Mucosa of descending colon (tissue), 3 donors: ENCODE measurements at regions of chr3 and their contacts with region 1.

Region 1: DNA sequence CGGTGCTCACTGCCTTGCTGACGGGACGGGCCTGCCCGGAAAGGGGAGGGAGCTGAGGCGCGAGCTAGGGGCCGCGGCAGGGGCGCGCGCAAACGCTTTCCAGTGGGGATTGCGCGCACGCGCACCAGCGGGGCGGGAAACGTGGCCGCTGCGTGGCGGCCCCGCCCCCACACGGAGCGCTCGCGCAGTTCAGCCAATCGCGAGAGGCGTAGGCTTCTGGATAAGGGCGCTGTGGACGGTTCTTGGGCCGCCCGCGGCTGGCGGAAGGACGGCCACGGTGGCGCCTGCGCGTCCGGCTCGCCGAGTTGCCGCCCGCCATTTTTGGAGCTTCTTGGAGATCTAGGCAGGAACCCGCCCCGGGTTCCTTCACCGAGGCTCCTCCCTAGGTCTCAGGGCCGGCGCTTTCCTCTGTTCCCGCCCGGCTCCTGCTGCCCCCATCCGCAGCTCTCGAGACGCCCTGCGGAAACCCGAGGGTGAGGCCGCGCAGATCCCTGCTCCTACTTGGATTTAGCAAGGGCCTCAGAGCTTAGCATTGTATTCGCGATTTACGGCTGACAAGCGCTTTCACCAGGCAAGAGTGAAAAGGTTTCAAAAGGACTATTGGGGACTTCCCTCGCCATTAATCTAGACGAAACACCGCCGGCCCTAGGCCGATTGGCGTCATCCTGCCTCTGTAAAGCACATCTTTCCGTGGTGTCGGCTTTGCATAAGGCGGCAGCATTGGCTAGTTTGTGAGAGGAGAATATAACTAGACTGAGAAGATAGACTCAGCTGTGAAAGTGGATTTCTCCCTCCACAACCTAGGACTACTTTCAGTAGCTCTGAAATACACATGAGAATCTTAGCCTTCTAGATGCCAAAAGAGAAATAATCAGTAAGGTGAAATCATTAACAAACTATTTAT is 496 bp upstream of the STAG1 start:
- DNase-seq: peak; percentile 99 to 100 (median 100)
- ATAC-seq: peak; percentile 90
- H3K4me3 ChIP-seq: peak overlapping the region; percentile 82
- H3K4me1 ChIP-seq: peaks cover 11% of the 10 kb centered on the region
- CTCF ChIP-seq: no peak

Region 2: GRCh38 chr3:136250226-136250902 is 502.3 kb before region 1 on chr3 and contains the start of gene PCCB:
- intact Hi-C with region 1: loop called in 1 of 2 experiments (anchors 5 kb)
- DNase-seq: peak; percentile 95 to 97 (median 96)
- ATAC-seq: peak; percentile 99
- H3K4me3 ChIP-seq: peak within 1 kb of the TSS; percentile 39
- H3K4me1 ChIP-seq: peaks cover 9% of the 10 kb centered on the region
- CTCF ChIP-seq: peak; percentile 73
- total RNA-seq, gene PCCB: 35.8 to 54.8 (median 49.9) TPM

Region 3: DNA sequence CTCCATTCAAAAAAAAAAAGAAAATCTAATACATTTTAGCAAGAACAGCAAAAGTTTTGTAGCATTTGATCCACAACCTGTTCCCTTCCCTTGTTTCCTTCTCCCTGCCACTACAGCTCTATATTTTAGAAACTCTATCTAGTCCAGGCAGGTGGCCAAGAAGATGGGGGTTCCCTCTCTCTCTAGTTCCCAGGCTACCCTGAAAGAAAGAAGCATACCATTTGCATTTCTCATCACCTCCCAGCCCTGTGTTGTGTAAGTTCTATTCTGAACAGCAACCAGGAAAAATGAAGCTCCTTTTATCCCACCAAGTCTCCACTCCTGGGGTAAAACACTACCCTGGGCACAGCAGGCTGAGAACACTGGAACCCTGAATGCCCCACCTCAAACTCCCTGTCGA is 402.5 kb before region 1 on chr3:
- intact Hi-C with region 1: no loop called
- DNase-seq: no peak
- ATAC-seq: no peak
- H3K4me3 ChIP-seq: no peak overlapping the region
- H3K4me1 ChIP-seq: no peaks in the 10 kb centered on the region
- CTCF ChIP-seq: no peak

Region 4: GRCh38 chr3:136861890-136862616 is 109.4 kb after region 1 on chr3 and contains the start of gene NCK1:
- intact Hi-C with region 1: loop called in 1 of 2 experiments (anchors 5 kb)
- DNase-seq: peak; percentile 99
- ATAC-seq: peak; percentile 97
- H3K4me3 ChIP-seq: peak within 1 kb of the TSS; percentile 68
- H3K4me1 ChIP-seq: peaks cover 5% of the 10 kb centered on the region
- CTCF ChIP-seq: no peak
- total RNA-seq, gene NCK1: 47.0 to 56.4 (median 50.1) TPM